Sciatic nerve (tissue), 2 donors: ENCODE measurements at regions of chr6 and their contacts with region 1.

Region 1: GRCh38 chr6:132798869-132799538 is 567 bp upstream of the SLC18B1 start:
- DNase-seq: peak; percentile 78
- ATAC-seq: peak; percentile 86

Region 2: GRCh38 chr6:132734694-132735635 is 64.0 kb before region 1 on chr6:
- intact Hi-C with region 1: no loop called
- DNase-seq: no peak
- ATAC-seq: peak; percentile 72

Region 3: DNA sequence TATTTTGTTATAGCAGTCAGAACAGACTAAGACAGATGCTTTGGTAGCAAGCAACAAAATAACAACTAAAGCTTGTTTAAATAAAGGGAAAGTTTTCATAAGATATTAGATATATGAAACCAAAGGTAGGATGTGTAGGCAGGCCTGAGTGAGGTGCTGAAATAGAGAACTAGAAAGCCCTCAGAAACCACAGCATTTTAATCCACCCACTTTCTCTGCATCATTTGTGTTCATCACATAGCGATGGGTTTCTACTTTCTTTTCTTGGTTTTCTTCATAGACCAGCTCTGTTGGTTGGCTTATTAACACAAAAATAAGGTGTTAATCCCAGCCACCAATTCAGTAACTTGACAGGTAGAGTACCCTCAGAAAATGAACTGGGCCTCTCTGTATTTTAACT is 73.9 kb after region 1 on chr6:
- intact Hi-C with region 1: no loop called
- DNase-seq: no peak
- ATAC-seq: no peak

Region 4: DNA sequence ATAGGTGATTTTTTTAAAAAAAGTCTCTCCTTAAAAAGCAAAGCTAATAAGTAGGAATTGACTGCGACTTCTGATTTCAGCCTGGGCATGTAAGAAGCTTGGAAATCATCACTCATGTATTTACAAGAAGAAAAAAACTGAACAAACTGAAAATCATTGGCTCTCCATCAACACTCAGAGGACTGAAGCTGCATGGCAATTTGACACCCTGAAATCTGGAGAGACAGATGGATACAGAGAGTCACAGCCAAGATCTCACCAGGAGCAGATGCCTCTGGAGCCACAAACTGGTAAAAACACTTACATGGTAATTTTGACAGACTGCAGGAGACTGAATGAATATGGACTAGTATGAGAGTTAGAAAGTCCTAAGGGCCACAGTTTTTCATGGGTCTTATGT is 898.7 kb after region 1 on chr6:
- intact Hi-C with region 1: loop called (anchors 10 kb)
- DNase-seq: no peak
- ATAC-seq: no peak